Esophagus muscularis mucosa (tissue), 4 donors: ENCODE measurements at regions of chr16 and their contacts with region 1.

Region 1: GRCh38 chr16:67159593-67160406 is at the starts of genes FBXL8 and TRADD:
- DNase-seq: no peak
- H3K4me3 ChIP-seq: peak within 1 kb of the TSS; percentile 79 to 95 (median 94)
- H3K27ac ChIP-seq: peak within 1 kb of the TSS; percentile 76 to 91 (median 81)
- H3K4me1 ChIP-seq: peaks cover 65 to 74% (median 67%) of the 10 kb centered on the region in 4 donors
- H3K27me3 ChIP-seq: peaks cover 0 to 23% (median 2%) of the 10 kb centered on the region in 4 donors
- CTCF ChIP-seq: peak; percentile 26 to 37 (median 33)
- EP300 ChIP-seq: no peak
- POLR2A ChIP-seq: peak; percentile 75
- total RNA-seq, gene FBXL8: 10.3 to 22.1 (median 15.1) TPM
- total RNA-seq, gene TRADD: 26.6 to 53.4 (median 42.7) TPM

Region 2: DNA sequence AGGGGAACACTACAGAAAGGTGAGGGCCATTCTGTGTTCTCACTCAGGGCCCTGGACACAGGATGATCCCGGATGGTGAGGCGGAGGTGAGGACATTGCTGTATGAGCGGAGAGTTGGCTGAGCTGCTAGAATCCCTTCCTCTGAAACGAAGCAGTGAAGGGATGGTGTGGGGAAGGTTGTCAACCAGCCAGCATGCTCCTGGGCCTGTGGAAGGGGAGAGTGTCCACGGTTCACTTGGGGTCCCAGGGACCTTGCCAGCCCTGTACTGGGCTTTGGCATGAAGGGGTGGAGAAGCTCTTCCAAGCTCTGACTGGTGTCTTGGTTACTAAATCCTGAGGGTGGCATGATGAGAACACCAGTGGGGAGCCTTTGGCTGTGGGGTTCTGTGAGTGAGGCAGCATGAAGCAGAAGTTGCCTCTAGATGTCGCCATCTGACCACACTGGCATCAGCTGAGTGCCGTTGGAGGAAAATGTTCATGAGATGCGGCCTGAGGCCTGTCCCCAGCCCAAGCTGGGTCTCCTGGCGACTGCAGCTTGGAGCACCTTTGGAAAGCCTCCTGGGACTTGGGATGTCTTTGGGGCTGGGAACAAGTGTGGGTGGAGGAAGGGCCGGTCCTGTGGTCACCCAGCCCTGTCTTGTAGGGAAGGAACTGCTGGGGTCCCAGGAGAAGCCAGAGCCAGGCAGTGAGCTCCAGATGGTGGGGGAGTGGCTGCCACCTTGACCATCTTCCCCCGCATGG is 264.7 kb before region 1 on chr16:
- intact Hi-C with region 1: loop called (anchors 5 kb)
- DNase-seq: no peak
- H3K4me3 ChIP-seq: no peak overlapping the region
- H3K27ac ChIP-seq: peak overlapping the region in 1 of 4 donors; percentile 33
- H3K4me1 ChIP-seq: peaks cover 17 to 37% (median 32%) of the 10 kb centered on the region in 4 donors
- H3K27me3 ChIP-seq: no peaks in the 10 kb centered on the region
- CTCF ChIP-seq: peak; percentile 76 to 86 (median 84)
- EP300 ChIP-seq: no peak
- POLR2A ChIP-seq: no peak

Region 3: GRCh38 chr16:66977341-66978113 is 182.3 kb before region 1 on chr16:
- intact Hi-C with region 1: loop called (anchors 1 kb)
- DNase-seq: peak; percentile 97
- H3K4me3 ChIP-seq: no peak overlapping the region
- H3K27ac ChIP-seq: no peak overlapping the region
- H3K4me1 ChIP-seq: peaks cover 0 to 8% (median 2%) of the 10 kb centered on the region in 4 donors
- H3K27me3 ChIP-seq: peaks cover 0 to 15% (median 0%) of the 10 kb centered on the region in 4 donors
- CTCF ChIP-seq: peak in 2 of 3 experiments; percentile 96 to 97
- EP300 ChIP-seq: no peak
- POLR2A ChIP-seq: no peak

Region 4: DNA sequence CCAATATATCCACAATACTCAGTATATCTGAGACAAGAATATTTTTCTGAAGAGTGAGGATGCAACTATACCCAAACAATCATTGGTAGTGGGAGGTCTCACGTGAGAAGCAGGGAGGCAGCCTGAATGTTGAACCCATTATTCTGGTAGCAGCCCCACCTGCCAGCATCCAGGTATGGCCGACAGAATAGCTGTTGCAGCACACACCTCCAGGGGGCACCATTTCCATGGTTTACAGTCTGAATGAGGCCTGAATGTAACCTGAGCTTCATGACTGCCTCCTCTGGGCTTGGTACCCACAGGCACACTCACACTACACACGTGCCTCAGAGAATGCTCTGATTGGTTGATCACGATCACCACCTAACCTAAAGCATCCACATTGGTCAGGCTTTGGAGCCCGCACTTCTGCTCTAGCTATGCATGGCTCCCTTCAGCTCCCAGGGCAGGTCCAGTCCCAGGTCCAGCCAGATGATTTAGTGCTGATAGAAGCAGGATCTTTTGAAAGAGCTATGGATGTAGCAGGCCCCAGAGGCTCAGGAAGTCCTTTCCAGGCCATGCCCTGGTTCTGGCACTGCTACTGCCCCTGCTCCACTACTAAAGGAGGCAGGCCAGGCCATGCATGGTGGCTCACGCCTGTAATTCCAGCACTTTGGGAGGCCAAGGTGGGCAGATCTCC is 141.9 kb before region 1 on chr16:
- intact Hi-C with region 1: loop called (anchors 5 kb)
- DNase-seq: no peak
- H3K4me3 ChIP-seq: no peak overlapping the region
- H3K27ac ChIP-seq: no peak overlapping the region
- H3K4me1 ChIP-seq: peaks cover 18 to 24% (median 20%) of the 10 kb centered on the region in 4 donors
- H3K27me3 ChIP-seq: no peaks in the 10 kb centered on the region
- CTCF ChIP-seq: peak; percentile 42 to 68 (median 66)
- EP300 ChIP-seq: no peak
- POLR2A ChIP-seq: no peak

Region 5: DNA sequence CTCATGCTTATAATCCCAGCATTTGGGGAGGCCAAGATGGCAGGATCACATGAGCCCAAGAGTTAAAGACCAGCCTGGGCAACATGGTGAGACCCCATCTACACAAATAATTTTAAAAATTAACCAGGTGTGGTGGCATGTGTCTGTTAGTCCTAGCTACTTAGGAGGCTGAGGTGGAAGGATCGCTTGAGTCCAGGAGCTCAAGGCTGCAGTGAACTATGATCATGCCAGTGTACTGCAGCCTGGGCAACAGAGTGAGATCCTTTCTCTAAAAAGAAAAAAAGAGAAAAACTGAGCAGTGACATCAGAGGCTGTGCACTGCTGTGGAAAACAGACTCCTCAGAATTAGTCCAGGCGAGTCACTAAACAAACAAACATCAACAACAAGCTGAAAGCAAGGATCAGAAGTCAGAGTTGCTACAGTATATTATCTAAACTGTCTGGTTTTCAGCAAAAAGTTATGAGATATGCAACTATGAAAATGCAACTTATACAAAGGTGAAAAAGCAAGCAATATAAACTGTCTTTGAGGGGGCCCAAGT is 91.5 kb before region 1 on chr16:
- intact Hi-C with region 1: no loop called
- DNase-seq: no peak
- H3K4me3 ChIP-seq: no peak overlapping the region
- H3K27ac ChIP-seq: no peak overlapping the region
- H3K4me1 ChIP-seq: no peaks in the 10 kb centered on the region
- H3K27me3 ChIP-seq: no peaks in the 10 kb centered on the region
- CTCF ChIP-seq: no peak
- EP300 ChIP-seq: no peak
- POLR2A ChIP-seq: no peak

Region 6: GRCh38 chr16:67183627-67184328 is 24.0 kb after region 1 on chr16 and contains the start of gene MATCAP1:
- intact Hi-C with region 1: loop called (anchors 2 kb)
- DNase-seq: peak; percentile 99
- H3K4me3 ChIP-seq: peak within 1 kb of the TSS; percentile 70 to 92 (median 72)
- H3K27ac ChIP-seq: peak within 1 kb of the TSS; percentile 94 to 95 (median 94)
- H3K4me1 ChIP-seq: peaks cover 26 to 64% (median 56%) of the 10 kb centered on the region in 4 donors
- H3K27me3 ChIP-seq: no peaks in the 10 kb centered on the region
- CTCF ChIP-seq: peak in 1 of 3 experiments; percentile 7
- EP300 ChIP-seq: peak; percentile 78
- POLR2A ChIP-seq: no peak
- total RNA-seq, gene MATCAP1: 7.8 to 17.7 (median 11.2) TPM